HCT116 (cell line): ENCODE measurements at regions of chr22 and their contacts with region 1.

Region 1: GRCh38 chr22:37777122-37777687 is 30.5 kb upstream of the GCAT start:
- DNase-seq: peak; percentile 84
- ATAC-seq: peak; percentile 56
- H3K4me3 ChIP-seq: no peak overlapping the region
- H3K27ac ChIP-seq: peak overlapping the region; percentile 30
- H3K4me1 ChIP-seq: peaks cover 42 to 84% of the 10 kb centered on the region in 2 experiments
- H3K27me3 ChIP-seq: no peaks in the 10 kb centered on the region
- CTCF ChIP-seq: no peak
- POLR2A ChIP-seq: peak; percentile 39
- RAD21 ChIP-seq: no peak

Region 2: GRCh38 chr22:37745548-37746365 is 31.4 kb before region 1 on chr22:
- CTCF ChIA-PET with region 1: interaction called, 6 read pairs
- POLR2A ChIA-PET with region 1: interaction called, 63 read pairs
- RAD21 ChIA-PET with region 1: interaction called in 1 of 2 experiments, 3 read pairs
- intact Hi-C with region 1: loop called (anchors 5 kb)
- DNase-seq: no peak
- ATAC-seq: peak; percentile 47
- H3K4me3 ChIP-seq: peak overlapping the region; percentile 94 to 98
- H3K27ac ChIP-seq: peak overlapping the region; percentile 98
- H3K4me1 ChIP-seq: peaks cover 71 to 85% of the 10 kb centered on the region in 2 experiments
- H3K27me3 ChIP-seq: no peaks in the 10 kb centered on the region
- CTCF ChIP-seq: no peak
- POLR2A ChIP-seq: no peak
- RAD21 ChIP-seq: no peak

Region 3: GRCh38 chr22:37752466-37753087 is 24.6 kb before region 1 on chr22:
- CTCF ChIA-PET with region 1: interaction called, 16 read pairs
- POLR2A ChIA-PET with region 1: interaction called, 63 read pairs
- RAD21 ChIA-PET with region 1: interaction called, 5 to 14 read pairs
- intact Hi-C with region 1: loop called (anchors 2 kb)
- DNase-seq: peak; percentile 92
- ATAC-seq: peak; percentile 67
- H3K4me3 ChIP-seq: peak overlapping the region; percentile 94 to 98
- H3K27ac ChIP-seq: peak overlapping the region; percentile 98
- H3K4me1 ChIP-seq: peaks cover 65 to 79% of the 10 kb centered on the region in 2 experiments
- H3K27me3 ChIP-seq: no peaks in the 10 kb centered on the region
- CTCF ChIP-seq: 0 out of 6 replicates have a peak, but pooled peaks of 1 of the 3 experiments have one; percentile 25
- POLR2A ChIP-seq: no peak
- RAD21 ChIP-seq: no peak

Region 4: GRCh38 chr22:37764622-37765021 is 12.6 kb before region 1 on chr22:
- CTCF ChIA-PET with region 1: interaction called, 10 read pairs
- POLR2A ChIA-PET with region 1: interaction called, 5 read pairs
- RAD21 ChIA-PET with region 1: interaction called in 1 of 2 experiments, 3 read pairs
- intact Hi-C with region 1: no loop called
- DNase-seq: no peak
- ATAC-seq: no peak
- H3K4me3 ChIP-seq: no peak overlapping the region
- H3K27ac ChIP-seq: no peak overlapping the region
- H3K4me1 ChIP-seq: peaks cover 18 to 63% of the 10 kb centered on the region in 2 experiments
- H3K27me3 ChIP-seq: no peaks in the 10 kb centered on the region
- CTCF ChIP-seq: no peak
- POLR2A ChIP-seq: no peak
- RAD21 ChIP-seq: no peak

Region 5: GRCh38 chr22:37792494-37792893 is 15.3 kb after region 1 on chr22:
- CTCF ChIA-PET with region 1: interaction called, 23 read pairs
- POLR2A ChIA-PET with region 1: interaction called, 19 read pairs
- RAD21 ChIA-PET with region 1: interaction called, 5 to 6 read pairs
- intact Hi-C with region 1: no loop called
- DNase-seq: no peak
- ATAC-seq: no peak
- H3K4me3 ChIP-seq: no peak overlapping the region
- H3K27ac ChIP-seq: no peak overlapping the region; the same call in 1 of the 2 replicates
- H3K4me1 ChIP-seq: peaks cover 9 to 39% of the 10 kb centered on the region in 2 experiments; a peak in 3 of 4 replicates
- H3K27me3 ChIP-seq: no peaks in the 10 kb centered on the region
- CTCF ChIP-seq: no peak
- POLR2A ChIP-seq: no peak
- RAD21 ChIP-seq: no peak